ENCODE measurements at regions of chr7 and their contacts with region 1.

Region 1: GRCh38 chr7:149355390-149356048 is 93.5 kb downstream of the ZNF783 start:
- DNase-seq: peak; percentile 79
- ATAC-seq: peak; percentile 96
- H3K4me3 Mint-ChIP-seq: peak overlapping the region; percentile 72
- H3K27ac Mint-ChIP-seq: peak overlapping the region; percentile 91
- H3K4me1 Mint-ChIP-seq: peaks cover 15% of the 10 kb centered on the region
- H3K27me3 Mint-ChIP-seq: peaks cover 3% of the 10 kb centered on the region
- CTCF ChIP-seq: no peak

Region 2: GRCh38 chr7:148738737-148739535 is 616.6 kb before region 1 on chr7:
- CTCF ChIA-PET with region 1: no interaction called
- POLR2A ChIA-PET with region 1: no interaction called
- DNase-seq: no peak
- ATAC-seq: no peak
- H3K4me3 Mint-ChIP-seq: no peak overlapping the region
- H3K27ac Mint-ChIP-seq: no peak overlapping the region; the same call in 1 of the 2 replicates
- H3K4me1 Mint-ChIP-seq: no peaks in the 10 kb centered on the region
- H3K27me3 Mint-ChIP-seq: no peaks in the 10 kb centered on the region
- CTCF ChIP-seq: no peak

Region 3: DNA sequence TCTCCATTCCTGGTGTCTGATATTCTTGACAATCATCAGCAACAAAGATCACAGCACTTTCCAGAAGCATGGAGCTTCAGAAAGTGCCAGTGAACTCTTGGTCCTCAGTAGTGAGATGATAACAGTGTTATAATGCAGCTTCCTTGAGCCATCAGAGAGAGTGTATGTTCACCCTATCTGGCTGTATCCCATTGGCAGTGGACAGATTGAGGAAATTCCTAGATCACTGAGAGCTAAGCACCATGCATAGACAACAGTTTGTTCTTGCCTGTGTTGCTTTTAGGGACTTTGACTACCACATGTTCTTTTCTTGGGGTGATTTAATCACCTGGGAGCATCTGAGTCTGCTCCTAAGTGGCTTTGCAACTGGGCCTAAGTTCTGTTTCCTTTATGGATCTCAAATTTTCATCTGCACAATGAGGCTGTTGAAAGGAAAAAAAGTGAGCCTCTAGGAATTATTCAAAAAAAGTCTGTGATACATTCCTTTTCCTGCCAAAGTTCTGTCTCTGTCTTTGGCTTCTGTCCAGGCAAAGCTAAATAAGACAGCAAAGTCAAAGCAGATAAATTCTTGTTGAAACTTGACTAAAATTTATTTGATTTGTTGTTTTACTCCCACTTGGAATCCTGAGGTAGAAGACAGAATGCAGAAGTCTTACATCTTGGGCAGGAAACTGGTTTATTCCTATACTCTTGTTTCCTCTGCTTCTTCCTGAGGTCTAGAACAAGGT is 174.6 kb before region 1 on chr7:
- CTCF ChIA-PET with region 1: no interaction called
- POLR2A ChIA-PET with region 1: no interaction called
- DNase-seq: no peak
- ATAC-seq: no peak
- H3K4me3 Mint-ChIP-seq: no peak overlapping the region
- H3K27ac Mint-ChIP-seq: peak overlapping the region; percentile 93
- H3K4me1 Mint-ChIP-seq: no peaks in the 10 kb centered on the region
- H3K27me3 Mint-ChIP-seq: no peaks in the 10 kb centered on the region
- CTCF ChIP-seq: no peak

Region 4: DNA sequence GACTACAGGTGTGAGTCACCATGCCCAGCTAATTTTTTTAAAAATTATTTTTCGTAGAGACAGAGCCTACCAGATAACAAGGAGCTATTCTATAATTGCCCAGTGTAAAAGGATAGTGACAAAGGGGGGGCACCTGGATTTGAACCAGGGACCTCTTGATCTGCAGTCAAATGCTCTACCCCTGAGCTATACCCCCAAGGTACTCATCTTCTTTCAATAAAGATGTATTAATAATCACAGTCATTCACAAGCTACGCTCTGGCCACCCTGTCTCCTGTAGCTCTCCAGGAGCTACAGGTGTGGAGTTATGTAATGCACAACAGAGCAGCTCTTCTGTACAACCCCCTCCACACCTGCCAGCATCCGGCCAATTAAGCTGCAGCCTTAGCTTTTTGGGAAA is 21.9 kb after region 1 on chr7:
- CTCF ChIA-PET with region 1: interaction called, 10 read pairs
- POLR2A ChIA-PET with region 1: no interaction called
- DNase-seq: no peak
- ATAC-seq: no peak
- H3K4me3 Mint-ChIP-seq: no peak overlapping the region
- H3K27ac Mint-ChIP-seq: no peak overlapping the region
- H3K4me1 Mint-ChIP-seq: no peaks in the 10 kb centered on the region
- H3K27me3 Mint-ChIP-seq: peaks cover 15% of the 10 kb centered on the region
- CTCF ChIP-seq: no peak

Measured in WTC11 (cell line).